ENCODE measurements at regions of chr2 and their contacts with region 1.

Region 1: GRCh38 chr2:17728210-17728609 is 25.4 kb downstream of the SMC6 start:
- DNase-seq: no peak
- H3K4me3 ChIP-seq: no peak overlapping the region
- H3K27ac ChIP-seq: no peak overlapping the region
- H3K4me1 ChIP-seq: no peaks in the 10 kb centered on the region
- H3K27me3 ChIP-seq: no peaks in the 10 kb centered on the region
- CTCF ChIP-seq: no peak

Region 2: DNA sequence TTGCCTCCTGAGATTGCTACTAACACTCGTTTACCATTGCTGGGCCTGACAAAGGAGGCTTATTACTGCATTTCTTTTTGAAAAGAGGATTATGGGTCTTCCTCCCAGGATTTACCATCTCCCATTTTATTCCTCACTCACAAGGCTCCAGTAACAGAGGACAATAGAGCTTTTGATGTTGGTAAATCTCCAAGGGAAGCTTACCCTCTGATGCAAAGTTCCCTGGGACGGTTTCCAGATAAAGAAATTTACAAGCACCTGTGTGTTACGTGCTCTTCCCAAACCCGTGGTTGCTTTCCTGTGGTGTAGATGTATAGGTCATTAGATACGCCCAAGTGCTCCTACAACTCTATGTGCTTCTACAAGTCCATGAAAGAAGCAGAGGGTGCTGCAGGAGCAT is 170.6 kb before region 1 on chr2:
- CTCF ChIA-PET with region 1: no interaction called
- POLR2A ChIA-PET with region 1: no interaction called
- intact Hi-C with region 1: no loop called
- DNase-seq: no peak
- H3K4me3 ChIP-seq: no peak overlapping the region
- H3K27ac ChIP-seq: no peak overlapping the region
- H3K4me1 ChIP-seq: no peaks in the 10 kb centered on the region
- H3K27me3 ChIP-seq: no peaks in the 10 kb centered on the region
- CTCF ChIP-seq: no peak

Region 3: GRCh38 chr2:17793803-17794354 is 65.7 kb after region 1 on chr2:
- CTCF ChIA-PET with region 1: no interaction called
- POLR2A ChIA-PET with region 1: interaction called, 13 read pairs
- intact Hi-C with region 1: no loop called
- DNase-seq: no peak
- H3K4me3 ChIP-seq: no peak overlapping the region
- H3K27ac ChIP-seq: no peak overlapping the region
- H3K4me1 ChIP-seq: no peaks in the 10 kb centered on the region
- H3K27me3 ChIP-seq: peaks cover 5% of the 10 kb centered on the region; the same call in 1 of the 2 replicates
- CTCF ChIP-seq: no peak

Measured in PC-9 (cell line).